Posterior cingulate gyrus (tissue), 11 donors: ENCODE measurements at regions of chrX and their contacts with region 1.

Region 1: DNA sequence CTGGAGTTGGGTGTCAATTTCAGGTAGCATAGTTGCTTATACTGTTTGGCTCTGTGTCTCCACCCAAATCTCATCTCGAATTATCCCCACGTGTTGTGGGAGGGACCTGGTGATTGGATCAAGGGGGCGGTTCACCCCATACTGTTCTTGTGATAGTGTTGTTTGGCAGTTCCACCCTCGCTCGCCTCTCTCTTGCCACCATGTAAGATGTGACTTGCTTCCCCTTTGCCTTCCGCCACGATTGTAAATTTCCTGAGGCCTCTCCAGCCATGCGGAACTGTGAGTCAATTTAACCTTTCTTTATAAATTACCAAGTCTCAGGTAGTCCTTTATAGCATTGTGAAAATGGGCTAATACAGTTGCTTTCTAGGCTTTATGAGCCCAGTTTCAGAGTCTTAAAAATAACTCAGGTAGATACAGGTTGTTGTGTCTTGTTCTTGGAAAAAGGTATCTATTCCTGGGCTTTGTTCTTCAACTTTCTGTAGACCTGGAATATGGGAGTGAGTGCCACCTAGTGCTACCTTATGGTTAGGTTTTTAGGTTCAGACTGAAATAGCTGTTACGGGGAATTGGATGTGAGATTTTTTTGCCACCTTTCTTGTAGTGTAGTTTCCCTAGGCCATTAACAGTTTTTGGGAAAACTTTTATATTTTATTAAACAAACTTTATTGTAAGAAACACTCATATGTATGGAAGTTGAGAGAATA is 15.6 kb downstream of the PGK1 start:
- DNase-seq: no peak

Region 2: DNA sequence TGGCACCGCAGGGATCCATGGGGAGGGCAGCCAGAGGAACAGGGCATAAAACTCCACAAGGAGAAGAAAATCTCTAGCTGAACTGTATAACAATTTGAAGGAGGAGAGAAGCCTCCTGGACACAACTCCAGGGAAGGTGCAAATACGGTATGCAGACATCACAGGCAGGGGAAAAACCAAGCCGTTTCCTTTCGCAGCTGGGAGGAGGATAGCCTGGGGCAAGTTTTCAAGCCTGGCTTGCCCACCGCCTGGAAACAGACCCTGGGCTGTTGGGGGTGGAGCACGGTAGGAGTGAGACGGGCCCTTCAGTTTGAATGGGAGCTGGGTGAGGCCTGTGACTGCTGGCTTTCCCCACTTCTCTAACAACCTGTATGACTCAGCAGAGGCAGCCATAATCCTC is 63.2 kb after region 1 on chrX:
- intact Hi-C with region 1: no loop called
- DNase-seq: no peak

Region 3: GRCh38 chrX:79081895-79082512 is 962.3 kb after region 1 on chrX:
- intact Hi-C with region 1: loop called (anchors 10 kb)
- DNase-seq: no peak